Body of pancreas (tissue), 4 donors: ENCODE measurements at regions of chr10 and their contacts with region 1.

Region 1: DNA sequence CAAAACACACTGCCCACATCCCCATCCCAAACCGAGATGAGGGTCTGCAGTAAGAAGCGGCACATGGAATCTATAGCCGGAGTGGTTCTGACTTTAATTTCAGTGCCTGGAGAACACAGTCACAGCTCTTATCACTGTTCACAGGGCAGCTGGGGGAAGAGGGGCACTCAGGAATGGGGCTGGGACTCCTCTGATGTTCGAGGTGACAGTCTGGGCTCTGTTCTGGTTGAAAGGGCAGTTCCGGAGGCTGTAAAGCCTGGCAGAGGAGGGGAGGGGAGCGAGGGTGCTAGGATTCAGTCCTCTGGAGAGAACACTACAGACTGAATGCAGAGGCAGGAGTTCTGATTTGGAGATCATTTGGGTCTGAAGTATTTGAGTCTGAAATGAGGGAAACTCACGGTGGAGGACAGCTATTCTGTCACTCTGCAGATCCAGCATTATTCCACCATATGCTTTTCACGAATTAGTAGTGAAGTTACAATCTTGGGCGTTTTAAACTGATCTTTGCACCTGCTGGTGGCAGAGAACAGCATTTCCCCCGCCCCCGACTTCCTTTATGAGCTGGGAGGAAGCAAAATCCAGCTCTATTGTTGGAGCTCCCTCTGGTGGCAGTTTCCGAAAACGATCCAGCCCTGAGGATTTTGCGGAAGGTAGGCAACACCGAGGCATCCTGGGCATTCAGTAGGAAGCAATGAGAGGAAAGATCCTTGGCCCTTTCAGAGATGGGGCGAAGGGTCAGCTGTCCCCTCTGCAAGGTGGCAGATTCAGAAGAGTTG is 22.7 kb upstream of the KCNK18 start:
- DNase-seq: peak; percentile 84 to 90 (median 88)
- ATAC-seq: peak; percentile 91
- H3K4me3 ChIP-seq: peak overlapping the region in 1 of 2 donors; percentile 23
- H3K27ac ChIP-seq: no peak overlapping the region
- H3K4me1 ChIP-seq: peaks cover 17% of the 10 kb centered on the region
- H3K27me3 ChIP-seq: peaks cover 0 to 1% of the 10 kb centered on the region in 2 donors
- CTCF ChIP-seq: peak; percentile 83 to 93 (median 91)
- POLR2A ChIP-seq: peak in 1 of 3 donors; percentile 29

Region 2: GRCh38 chr10:116800286-116800929 is 374.2 kb before region 1 on chr10:
- intact Hi-C with region 1: loop called (anchors 5 kb)
- DNase-seq: no peak
- ATAC-seq: no peak
- H3K4me3 ChIP-seq: no peak overlapping the region
- H3K27ac ChIP-seq: no peak overlapping the region
- H3K4me1 ChIP-seq: no peaks in the 10 kb centered on the region
- H3K27me3 ChIP-seq: peaks cover 0 to 4% of the 10 kb centered on the region in 2 donors
- CTCF ChIP-seq: no peak
- POLR2A ChIP-seq: no peak

Region 3: DNA sequence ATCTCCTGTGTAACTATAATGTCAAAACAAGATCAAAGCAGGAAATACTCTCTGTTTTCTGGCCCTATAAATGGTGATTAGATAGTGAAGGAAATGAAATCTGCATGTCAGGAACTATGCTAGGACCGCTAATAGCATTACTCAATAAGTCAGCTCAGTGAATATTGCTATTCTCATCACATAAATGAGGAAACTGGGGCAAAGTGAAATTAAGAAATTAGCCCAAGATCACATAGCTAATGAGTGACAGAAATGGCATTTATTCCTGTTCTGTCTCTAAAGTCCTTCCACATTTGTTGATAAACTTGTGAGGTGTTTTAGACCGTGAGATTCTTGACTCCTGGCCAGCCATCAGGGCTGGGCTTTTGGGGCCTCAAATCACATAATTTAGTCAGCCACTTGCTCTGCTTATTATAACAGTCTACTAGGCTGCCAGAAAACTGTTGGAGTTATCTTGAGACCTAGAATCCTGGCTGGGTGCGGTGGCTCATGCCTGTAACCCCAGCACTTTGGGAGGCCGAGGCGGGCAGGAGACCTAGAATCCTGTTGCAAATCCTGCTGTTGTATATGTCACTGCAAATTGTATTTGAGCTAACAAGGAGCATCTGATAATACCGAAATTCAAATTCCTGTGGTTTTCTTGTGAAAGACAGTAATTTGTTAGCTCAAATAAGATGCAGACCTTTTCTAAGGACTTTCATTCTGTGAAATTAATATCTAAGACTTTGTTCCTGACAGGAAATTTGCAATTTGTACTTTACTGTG is 103.2 kb before region 1 on chr10:
- intact Hi-C with region 1: no loop called
- DNase-seq: no peak
- ATAC-seq: no peak
- H3K4me3 ChIP-seq: no peak overlapping the region
- H3K27ac ChIP-seq: no peak overlapping the region
- H3K4me1 ChIP-seq: no peaks in the 10 kb centered on the region
- H3K27me3 ChIP-seq: no peaks in the 10 kb centered on the region
- CTCF ChIP-seq: no peak
- POLR2A ChIP-seq: no peak